HEK293T (cell line): ENCODE measurements at regions of chrX and their contacts with region 1.

Region 1: GRCh38 chrX:14029425-14030173 is at the start of gene GEMIN8:
- DNase-seq: peak; percentile 75

Region 2: GRCh38 chrX:13653022-13653693 is 376.4 kb before region 1 on chrX and contains the start of gene TCEANC:
- CTCF ChIA-PET with region 1: no interaction called
- POLR2A ChIA-PET with region 1: interaction called, 10 read pairs
- DNase-seq: peak; percentile 94

Region 3: DNA sequence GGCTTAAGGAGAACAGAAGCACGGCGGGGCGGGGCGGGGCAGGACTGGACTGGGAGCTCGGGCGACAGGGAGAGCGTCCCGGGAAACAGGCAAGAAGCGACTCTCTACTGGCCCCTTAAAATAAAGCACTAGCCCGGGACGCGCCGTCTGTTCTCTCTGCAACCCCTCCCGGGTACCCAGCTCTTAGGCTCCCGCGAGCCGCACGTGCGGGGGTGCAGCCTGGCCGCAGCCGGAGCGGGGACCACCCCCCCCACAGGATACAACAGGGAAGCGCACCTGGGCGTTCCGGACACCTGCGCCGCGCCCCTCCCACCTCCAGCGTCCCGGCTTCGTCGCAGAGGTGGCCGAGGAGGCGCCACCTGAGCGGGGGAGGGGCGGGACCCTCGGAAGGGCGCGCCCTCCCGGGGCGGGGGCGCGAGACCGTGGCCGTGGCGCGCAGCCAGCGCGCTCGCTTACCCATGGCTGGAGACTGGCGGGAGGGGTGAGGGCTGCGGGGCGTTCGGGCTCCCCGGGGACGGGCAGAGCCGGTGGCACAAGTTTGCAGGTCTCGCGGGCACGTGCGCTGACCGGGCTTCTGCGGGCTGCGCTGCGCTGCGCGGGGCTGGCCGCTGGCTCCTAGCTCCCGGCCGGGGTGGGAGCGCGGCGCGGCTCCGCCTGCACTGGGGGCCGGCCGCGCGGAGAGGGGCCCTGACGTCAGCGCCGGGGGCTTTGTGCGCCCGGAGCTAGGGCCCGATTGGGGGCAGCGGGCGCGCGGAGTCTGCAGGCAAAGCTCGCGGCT is 91.4 kb before region 1 on chrX:
- CTCF ChIA-PET with region 1: no interaction called
- POLR2A ChIA-PET with region 1: interaction called, 11 read pairs
- DNase-seq: peak; percentile 55